ENCODE measurements at regions of chr1 and their contacts with region 1.

Region 1: GRCh38 chr1:56821140-56821797 is 2.1 kb upstream of the FYB2 start:
- DNase-seq: peak; percentile 64
- H3K4me3 ChIP-seq: no peak overlapping the region; the same call in 1 of the 2 replicates
- H3K27ac ChIP-seq: no peak overlapping the region
- H3K27me3 ChIP-seq: no peaks in the 10 kb centered on the region
- CTCF ChIP-seq: peak; percentile 100

Region 2: GRCh38 chr1:56505792-56506743 is 315.2 kb before region 1 on chr1:
- CTCF ChIA-PET with region 1: interaction called, 10 read pairs
- POLR2A ChIA-PET with region 1: no interaction called
- DNase-seq: no peak
- H3K4me3 ChIP-seq: no peak overlapping the region
- H3K27ac ChIP-seq: no peak overlapping the region
- H3K27me3 ChIP-seq: no peaks in the 10 kb centered on the region
- CTCF ChIP-seq: no peak

Region 3: DNA sequence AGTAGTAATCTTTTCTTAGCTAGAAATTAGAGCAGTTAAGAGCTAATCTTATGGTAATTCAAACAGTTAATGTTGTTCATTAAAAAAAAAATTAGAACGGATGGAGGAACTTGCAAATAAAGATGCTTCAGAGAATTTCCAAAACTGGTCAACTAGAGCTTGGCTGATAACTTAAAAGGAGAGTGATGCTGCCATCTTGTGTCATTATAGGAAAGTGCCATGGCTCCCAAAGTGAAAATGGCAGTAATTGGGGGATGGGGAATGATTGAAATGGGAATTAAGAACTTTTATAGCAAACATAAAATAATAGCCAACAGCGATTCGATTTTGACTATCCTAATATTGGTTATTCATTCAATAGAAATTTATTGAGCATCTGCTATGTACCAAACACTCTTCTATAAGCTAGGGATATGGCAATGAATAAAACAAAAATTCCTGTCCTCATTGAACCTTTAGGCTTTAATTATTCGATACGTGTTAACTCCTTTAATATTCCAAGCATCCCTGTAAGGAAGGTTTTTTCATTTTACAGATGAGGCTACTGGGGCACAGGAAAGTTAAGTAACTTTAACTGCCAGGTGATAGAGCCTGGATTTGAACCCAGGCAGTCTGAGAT is 236.2 kb before region 1 on chr1:
- CTCF ChIA-PET with region 1: interaction called, 26 read pairs
- POLR2A ChIA-PET with region 1: no interaction called
- DNase-seq: peak; percentile 49
- H3K4me3 ChIP-seq: no peak overlapping the region
- H3K27ac ChIP-seq: no peak overlapping the region
- H3K27me3 ChIP-seq: no peaks in the 10 kb centered on the region
- CTCF ChIP-seq: peak; percentile 81

Region 4: DNA sequence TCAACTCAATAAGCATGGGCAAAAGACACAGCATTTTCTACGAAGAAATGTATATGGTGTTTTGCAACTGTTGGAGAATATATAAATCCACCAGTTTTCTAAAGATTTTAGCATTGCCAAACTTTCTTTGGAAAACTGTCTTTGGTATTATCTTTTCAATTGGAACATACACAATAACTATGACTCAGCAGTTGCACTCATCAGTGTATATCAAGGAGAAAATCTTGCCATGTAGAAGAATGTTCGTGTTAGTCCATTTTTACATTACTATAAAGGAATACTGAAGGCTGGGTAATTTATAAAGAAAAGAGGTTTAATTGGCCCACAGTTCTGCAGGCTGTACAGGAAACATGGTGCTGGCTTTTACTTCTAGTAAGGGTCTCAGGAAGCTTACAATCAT is 135.1 kb before region 1 on chr1:
- CTCF ChIA-PET with region 1: no interaction called
- POLR2A ChIA-PET with region 1: no interaction called
- DNase-seq: peak; percentile 15
- H3K4me3 ChIP-seq: no peak overlapping the region
- H3K27ac ChIP-seq: no peak overlapping the region
- H3K27me3 ChIP-seq: no peaks in the 10 kb centered on the region
- CTCF ChIP-seq: no peak

Region 5: DNA sequence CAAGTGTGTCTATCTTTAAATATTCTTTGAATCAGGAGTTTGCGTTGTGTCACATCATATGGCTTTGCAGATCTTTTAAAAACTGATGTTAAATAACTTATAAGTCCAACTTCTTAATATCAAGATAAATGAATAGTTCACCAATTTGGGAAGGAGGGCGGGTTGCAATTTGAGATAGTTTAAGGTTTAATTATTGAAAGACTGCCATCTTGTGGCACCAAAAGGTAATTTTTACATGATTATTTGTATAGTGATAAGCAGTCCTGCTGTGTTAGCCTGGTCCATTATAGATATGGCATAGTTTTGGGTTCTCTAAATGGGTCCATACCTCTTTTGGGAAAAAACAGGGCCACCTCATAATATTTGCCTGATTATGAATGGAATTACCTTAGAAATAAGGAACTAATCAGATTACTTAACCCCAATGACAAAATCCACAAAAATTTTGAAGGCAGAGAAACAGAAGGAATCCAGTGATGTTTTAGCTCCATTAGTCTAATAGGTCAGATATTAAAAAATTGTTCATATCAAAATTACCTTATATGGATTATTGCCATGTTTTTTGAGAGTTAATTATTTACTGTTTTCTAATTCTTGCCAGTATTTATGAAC is 111.9 kb before region 1 on chr1:
- CTCF ChIA-PET with region 1: interaction called, 41 read pairs
- POLR2A ChIA-PET with region 1: no interaction called
- DNase-seq: peak; percentile 29
- H3K4me3 ChIP-seq: no peak overlapping the region
- H3K27ac ChIP-seq: no peak overlapping the region
- H3K27me3 ChIP-seq: no peaks in the 10 kb centered on the region
- CTCF ChIP-seq: peak; percentile 57

Region 6: DNA sequence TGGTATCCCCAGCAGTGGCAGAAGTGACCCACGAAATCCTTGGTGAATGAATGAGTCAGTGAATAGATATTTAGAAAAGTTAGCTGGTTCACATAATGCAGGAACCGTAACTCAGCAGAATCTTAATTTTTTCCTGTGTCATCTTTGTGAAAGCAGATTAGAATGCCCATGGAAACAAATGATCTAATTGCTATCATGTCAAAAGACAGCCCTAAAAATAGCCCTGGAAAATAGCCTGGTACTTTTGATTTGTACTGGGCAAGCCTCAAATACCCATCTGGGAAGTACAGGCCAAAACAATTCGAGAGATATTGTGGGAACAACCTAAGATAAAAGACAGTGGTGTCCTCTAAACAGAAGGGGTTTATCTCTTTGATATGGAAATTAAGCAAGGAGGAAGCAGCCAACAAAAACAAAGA is 23.2 kb before region 1 on chr1:
- CTCF ChIA-PET with region 1: interaction called, 15 read pairs
- POLR2A ChIA-PET with region 1: no interaction called
- DNase-seq: no peak
- H3K4me3 ChIP-seq: no peak overlapping the region
- H3K27ac ChIP-seq: no peak overlapping the region
- H3K27me3 ChIP-seq: no peaks in the 10 kb centered on the region
- CTCF ChIP-seq: no peak

Region 7: DNA sequence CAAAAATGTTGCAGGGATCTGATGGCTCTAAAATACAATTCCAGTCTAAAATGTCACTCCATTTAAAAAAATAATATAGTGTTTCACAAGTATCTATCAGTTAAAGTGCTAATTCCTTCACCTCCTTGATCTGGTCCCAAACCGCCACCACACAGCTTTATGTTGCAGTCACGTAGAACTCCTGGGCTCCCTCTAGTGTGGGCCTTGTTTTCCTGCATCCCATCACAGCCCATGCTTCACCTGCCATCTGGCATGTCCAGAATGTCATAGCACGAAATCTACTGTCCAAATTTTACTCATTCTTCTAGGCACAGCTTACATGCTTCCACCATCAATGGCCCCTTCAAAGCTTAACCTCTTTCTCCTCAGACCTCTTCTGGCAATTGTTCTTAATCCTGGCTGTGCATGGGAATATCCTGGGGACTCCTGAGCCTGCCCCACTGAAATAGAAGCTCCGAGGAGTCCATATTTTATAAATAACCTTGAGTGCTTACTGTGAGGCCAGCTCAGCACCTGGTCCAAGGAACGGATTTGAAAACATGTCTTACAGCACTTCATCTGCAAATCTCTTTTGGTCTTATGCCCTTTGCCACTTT is 17.6 kb before region 1 on chr1:
- CTCF ChIA-PET with region 1: interaction called, 16 read pairs
- POLR2A ChIA-PET with region 1: no interaction called
- DNase-seq: no peak
- H3K4me3 ChIP-seq: no peak overlapping the region
- H3K27ac ChIP-seq: no peak overlapping the region
- H3K27me3 ChIP-seq: no peaks in the 10 kb centered on the region
- CTCF ChIP-seq: peak; percentile 55

Region 8: DNA sequence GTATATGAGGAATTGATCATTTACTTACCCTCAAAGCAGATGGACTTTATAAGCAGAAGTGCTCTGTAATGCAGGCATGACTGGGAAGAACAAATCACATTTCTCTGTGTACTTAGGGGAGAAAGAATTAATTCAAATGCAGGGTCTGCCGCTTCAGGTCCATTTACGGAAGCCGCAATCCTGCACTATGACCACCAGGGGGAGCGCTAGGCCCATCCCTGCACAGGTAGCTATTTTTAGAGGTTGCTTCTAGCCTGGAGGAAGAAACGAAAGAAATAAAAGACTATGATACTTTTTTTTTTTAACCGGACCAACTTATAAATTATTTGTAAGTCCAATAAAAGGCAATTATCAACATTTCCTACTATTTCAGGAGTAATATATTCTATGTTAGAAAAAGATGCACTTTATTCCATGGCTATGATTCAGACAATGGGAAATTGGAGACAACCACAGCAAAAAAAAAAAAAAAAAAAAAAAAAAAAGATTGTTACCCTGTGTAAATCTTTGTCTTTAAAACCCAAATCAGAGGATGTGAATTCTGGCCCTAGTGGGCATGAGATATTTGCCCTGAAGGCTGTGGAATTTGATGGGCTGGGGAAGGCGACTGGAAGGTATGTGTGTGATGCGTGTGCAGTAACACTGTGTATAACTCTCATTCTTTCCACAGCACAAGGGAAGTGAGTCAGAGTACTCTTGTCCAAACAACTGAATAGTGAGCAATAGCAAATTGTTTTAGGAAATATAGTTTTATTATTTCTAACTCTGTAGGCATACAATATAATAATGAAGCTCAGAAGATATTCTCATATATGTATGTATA is 10.8 kb after region 1 on chr1:
- CTCF ChIA-PET with region 1: interaction called, 35 read pairs
- POLR2A ChIA-PET with region 1: no interaction called
- DNase-seq: peak; percentile 91
- H3K4me3 ChIP-seq: no peak overlapping the region
- H3K27ac ChIP-seq: peak overlapping the region; percentile 80
- H3K27me3 ChIP-seq: no peaks in the 10 kb centered on the region
- CTCF ChIP-seq: peak; percentile 98